Tibial artery (tissue), 4 donors: ENCODE measurements at regions of chr1 and their contacts with region 1.

Region 1: DNA sequence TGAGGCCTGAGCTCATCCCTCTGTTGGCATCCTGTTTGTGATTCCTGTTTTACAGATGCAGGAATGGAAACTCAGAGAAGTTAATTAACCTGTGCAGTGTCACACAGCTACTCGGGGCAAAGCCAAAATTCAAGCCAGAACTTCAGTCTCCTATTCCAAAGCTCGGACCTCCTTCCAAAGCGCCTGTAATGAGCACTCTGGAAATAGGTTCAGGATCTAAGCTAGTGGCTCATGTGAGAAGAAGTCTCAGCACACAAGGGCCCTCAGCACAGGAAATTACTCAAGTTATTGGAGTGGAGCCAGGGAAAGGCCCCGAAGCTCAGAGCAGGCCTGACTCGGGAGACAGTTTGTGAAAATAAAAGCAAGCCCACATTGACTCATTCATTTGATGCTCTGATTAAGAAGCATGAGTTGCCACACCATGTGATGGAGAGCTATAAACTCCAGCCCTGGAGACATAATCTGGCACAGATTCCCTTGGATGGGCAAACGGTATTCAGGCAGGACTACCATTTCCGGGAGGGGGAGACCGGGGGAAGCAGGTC is 50.6 kb upstream of the LYST start:
- DNase-seq: peak; percentile 94
- H3K4me3 ChIP-seq: no peak overlapping the region
- H3K27ac ChIP-seq: peak overlapping the region; percentile 60 to 65
- H3K4me1 ChIP-seq: peaks cover 0 to 17% (median 12%) of the 10 kb centered on the region in 4 donors
- H3K27me3 ChIP-seq: no peaks in the 10 kb centered on the region
- CTCF ChIP-seq: no peak

Region 2: GRCh38 chr1:235697508-235697907 is 219.8 kb before region 1 on chr1:
- intact Hi-C with region 1: no loop called
- DNase-seq: no peak
- H3K4me3 ChIP-seq: no peak overlapping the region
- H3K27ac ChIP-seq: no peak overlapping the region
- H3K4me1 ChIP-seq: no peaks in the 10 kb centered on the region
- H3K27me3 ChIP-seq: no peaks in the 10 kb centered on the region
- CTCF ChIP-seq: no peak

Region 3: DNA sequence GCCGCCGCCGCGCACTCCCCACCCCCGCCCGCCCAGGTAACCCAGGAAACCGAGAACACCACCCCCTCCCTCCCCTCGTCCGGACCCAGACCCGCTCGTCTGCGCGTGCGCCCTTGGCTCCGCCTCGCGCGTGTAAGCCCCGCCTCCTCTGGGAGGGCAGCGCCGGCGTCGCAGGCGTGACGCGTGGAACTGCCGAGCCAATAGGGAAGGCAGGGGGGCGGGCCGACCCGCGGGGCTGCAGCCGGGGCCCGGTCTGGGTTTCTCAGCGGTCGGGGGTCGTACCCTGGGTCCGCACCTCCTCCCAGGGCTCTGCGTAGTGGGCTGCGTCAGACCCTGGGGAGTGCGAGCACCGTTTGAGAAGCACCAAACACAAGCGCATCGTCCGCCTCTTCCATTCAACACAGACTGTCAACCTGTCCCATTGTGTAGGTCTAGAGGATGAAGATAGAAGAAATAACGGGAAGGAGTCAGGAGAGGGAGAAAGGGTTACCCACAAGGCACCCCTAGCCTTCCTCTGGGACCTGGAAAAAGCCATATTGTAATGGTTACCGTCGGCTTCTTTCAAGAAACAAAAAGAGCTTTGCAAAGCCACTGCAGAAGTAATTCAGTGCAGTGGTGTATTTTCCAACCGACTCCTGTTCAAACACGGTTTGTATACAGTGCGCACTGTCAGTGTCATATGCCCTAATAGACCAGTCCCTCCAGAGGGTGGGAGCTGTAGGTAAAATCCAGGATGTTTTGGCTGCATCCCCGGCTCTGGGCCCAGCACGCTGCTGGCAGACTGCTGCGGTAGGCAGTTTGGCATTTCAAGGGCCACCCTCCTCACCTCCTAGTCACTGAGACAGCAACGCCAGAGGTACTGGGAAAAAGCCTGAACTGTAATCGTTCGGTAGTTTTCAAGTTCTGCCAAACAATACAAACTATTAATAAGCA is 50.2 kb before region 1 on chr1:
- intact Hi-C with region 1: loop called (anchors 5 kb)
- DNase-seq: peak; percentile 93 to 97
- H3K4me3 ChIP-seq: peak overlapping the region; percentile 83 to 100
- H3K27ac ChIP-seq: peak overlapping the region; percentile 95 to 99
- H3K4me1 ChIP-seq: peaks cover 0 to 27% (median 16%) of the 10 kb centered on the region in 4 donors
- H3K27me3 ChIP-seq: no peaks in the 10 kb centered on the region
- CTCF ChIP-seq: no peak

Region 4: DNA sequence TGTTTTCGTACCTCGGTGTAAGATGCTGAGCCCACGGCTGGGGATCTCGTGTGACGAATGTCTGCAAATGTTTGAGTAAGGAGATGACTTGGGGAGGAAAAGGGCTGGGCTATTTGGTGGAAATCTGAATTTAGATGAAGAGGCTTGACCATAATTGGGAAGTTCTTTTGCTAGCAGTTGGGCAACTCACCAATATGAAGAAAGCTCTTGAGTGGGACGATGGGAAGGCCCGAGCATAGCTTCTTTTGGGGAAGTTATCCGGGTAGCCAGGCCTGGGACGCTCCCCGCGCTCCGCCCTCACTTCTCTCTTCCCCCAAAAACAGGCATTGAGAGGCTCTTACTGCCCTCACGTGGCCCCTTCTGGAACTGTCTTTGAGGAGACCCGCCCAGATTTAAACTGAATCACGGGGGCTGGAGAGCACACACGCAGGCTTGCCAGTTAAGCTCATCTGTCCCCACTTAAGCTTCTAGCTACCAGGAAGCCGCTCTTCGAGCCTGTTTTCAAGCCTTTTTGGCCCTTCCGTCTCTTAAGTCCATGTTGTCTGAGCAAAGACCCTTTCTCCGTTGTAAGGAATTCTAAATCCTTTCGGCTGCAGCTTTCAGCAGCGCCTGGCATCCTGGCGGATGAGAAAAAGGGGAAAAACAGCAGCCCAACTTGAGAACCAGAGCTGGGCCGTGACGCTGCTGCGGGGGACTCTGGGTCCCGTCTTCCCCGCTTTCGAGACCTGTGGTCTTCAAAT is 54.4 kb after region 1 on chr1:
- intact Hi-C with region 1: loop called (anchors 10 kb)
- DNase-seq: peak; percentile 97 to 99
- H3K4me3 ChIP-seq: peak overlapping the region; percentile 42 to 49
- H3K27ac ChIP-seq: peak overlapping the region; percentile 92 to 93
- H3K4me1 ChIP-seq: peaks cover 0 to 24% (median 14%) of the 10 kb centered on the region in 4 donors
- H3K27me3 ChIP-seq: no peaks in the 10 kb centered on the region
- CTCF ChIP-seq: peak; percentile 80 to 88

Region 5: DNA sequence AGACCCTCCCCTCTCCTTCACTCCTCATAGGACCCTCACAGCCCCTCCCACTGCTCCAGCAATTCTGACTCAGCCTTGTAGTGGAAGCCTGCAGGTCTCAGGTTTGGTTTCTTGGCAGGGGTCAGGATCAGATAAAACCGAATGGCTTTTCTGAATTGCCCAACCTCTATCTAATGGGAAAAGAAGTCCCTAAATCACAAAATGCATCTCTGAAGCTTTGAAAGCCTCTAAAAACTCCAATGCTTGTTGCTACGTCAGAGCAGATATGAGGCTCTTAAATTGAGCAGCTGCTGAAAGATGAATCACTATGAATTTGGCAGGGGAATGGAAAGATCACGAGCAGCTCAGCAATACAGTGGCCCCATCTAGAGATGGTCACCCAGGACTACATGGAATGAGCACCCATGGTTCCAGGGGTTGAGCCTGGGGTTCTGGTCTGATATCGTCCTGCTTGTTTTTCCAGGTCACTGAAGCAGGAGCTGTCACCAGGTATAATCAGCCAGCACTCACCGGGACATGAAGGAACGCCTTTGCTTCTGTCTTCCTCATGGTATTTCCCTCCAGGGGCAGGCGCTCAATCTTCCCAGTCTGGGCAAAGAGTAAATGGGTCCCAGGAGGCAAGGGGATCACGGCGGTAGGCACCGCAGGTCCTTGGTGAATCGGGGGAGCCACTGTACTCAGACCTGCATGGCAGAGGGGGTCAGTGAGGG is 73.2 kb after region 1 on chr1:
- intact Hi-C with region 1: no loop called
- DNase-seq: no peak
- H3K4me3 ChIP-seq: no peak overlapping the region
- H3K27ac ChIP-seq: no peak overlapping the region
- H3K4me1 ChIP-seq: peaks cover 0 to 5% (median 0%) of the 10 kb centered on the region in 4 donors
- H3K27me3 ChIP-seq: no peaks in the 10 kb centered on the region
- CTCF ChIP-seq: no peak